Endothelial cell of umbilical vein (primary cell): ENCODE measurements at regions of chr3 and their contacts with region 1.

Region 1: GRCh38 chr3:189937307-189938124 is 183.2 kb downstream of the P3H2 start:
- DNase-seq: peak; percentile 88
- H3K4me3 ChIP-seq: no peak overlapping the region
- H3K27ac ChIP-seq: peak overlapping the region; percentile 57
- H3K4me1 ChIP-seq: peaks cover 16% of the 10 kb centered on the region
- H3K27me3 ChIP-seq: no peaks in the 10 kb centered on the region
- CTCF ChIP-seq: no peak
- POLR2A ChIP-seq: no peak

Region 2: GRCh38 chr3:189664311-189664710 is 273.2 kb before region 1 on chr3:
- CTCF ChIA-PET with region 1: no interaction called
- POLR2A ChIA-PET with region 1: no interaction called
- dilution Hi-C with region 1: no loop called
- intact Hi-C with region 1: no loop called
- DNase-seq: peak; percentile 26
- H3K4me3 ChIP-seq: no peak overlapping the region
- H3K27ac ChIP-seq: no peak overlapping the region
- H3K4me1 ChIP-seq: no peaks in the 10 kb centered on the region
- H3K27me3 ChIP-seq: no peaks in the 10 kb centered on the region
- CTCF ChIP-seq: no peak
- POLR2A ChIP-seq: no peak

Region 3: DNA sequence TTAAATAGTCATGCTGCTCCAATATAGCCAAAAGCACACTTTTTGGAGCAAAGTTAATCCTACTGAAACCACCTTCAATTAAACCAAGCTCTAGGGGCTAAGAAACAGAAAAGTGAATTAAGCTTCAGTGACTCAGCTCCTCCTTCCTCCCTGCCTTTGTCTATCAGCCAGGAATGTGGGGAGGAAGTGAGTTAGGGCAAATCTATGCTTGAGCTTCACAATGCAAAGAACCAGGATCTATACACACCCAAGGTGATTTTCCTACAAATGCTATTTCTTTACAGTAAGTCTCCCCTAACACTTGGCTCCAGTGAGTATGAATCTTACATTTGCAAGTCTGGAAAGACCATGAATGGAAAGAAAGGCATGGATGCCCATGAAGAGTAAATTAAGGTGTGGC is 28.9 kb before region 1 on chr3:
- CTCF ChIA-PET with region 1: interaction called, 7 read pairs
- POLR2A ChIA-PET with region 1: no interaction called
- dilution Hi-C with region 1: no loop called
- intact Hi-C with region 1: loop called (anchors 1 kb)
- DNase-seq: peak; percentile 87
- H3K4me3 ChIP-seq: no peak overlapping the region
- H3K27ac ChIP-seq: peak overlapping the region; percentile 90
- H3K4me1 ChIP-seq: peaks cover 31% of the 10 kb centered on the region
- H3K27me3 ChIP-seq: no peaks in the 10 kb centered on the region
- CTCF ChIP-seq: no peak
- POLR2A ChIP-seq: peak; percentile 9